Lower leg skin (tissue), 4 donors: ENCODE measurements at regions of chr22 and their contacts with region 1.

Region 1: DNA sequence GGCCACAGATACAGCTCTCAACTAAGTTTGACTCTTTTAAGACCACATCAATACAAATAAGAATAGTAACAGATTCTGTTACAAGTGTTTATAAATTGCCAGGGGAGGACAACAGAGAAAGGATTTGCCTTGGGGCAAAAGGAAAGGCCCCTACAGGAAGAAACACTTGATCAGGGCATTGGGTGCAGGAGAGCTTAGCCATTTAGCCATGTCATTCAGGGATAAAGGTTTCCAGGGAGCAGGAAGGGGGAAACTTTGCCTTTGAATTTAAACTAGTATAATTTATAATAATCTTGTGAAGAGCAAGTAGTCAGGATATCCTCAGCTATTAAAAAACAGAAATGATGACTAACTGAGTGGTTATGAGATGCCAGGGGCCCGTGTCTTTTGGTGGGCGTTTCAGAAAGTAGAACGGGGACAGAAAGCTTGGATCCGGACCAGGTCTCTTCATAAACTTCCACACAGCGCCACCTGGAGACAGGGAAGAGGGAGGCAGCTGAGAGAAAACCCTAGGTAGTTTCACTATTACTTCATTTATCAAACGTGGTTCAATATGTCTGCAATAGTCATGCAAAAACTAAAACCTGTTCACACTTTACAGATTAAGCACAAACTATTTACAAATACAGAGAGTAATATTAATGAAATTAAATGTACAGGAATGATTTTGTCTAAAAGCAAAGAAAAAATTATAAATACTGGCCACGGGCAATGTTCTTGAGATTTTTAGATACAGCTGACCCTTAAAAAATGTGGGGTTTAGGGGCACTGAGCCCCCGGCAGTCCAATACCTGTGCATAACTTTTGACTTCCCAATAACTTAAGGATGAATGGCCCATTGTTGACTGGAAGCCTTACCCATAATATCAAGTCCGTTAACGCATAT is 11.0 kb upstream of the SLC5A4 start:
- DNase-seq: peak; percentile 67 to 92
- H3K4me3 ChIP-seq: no peak overlapping the region
- CTCF ChIP-seq: no peak
- POLR2A ChIP-seq: no peak

Region 2: DNA sequence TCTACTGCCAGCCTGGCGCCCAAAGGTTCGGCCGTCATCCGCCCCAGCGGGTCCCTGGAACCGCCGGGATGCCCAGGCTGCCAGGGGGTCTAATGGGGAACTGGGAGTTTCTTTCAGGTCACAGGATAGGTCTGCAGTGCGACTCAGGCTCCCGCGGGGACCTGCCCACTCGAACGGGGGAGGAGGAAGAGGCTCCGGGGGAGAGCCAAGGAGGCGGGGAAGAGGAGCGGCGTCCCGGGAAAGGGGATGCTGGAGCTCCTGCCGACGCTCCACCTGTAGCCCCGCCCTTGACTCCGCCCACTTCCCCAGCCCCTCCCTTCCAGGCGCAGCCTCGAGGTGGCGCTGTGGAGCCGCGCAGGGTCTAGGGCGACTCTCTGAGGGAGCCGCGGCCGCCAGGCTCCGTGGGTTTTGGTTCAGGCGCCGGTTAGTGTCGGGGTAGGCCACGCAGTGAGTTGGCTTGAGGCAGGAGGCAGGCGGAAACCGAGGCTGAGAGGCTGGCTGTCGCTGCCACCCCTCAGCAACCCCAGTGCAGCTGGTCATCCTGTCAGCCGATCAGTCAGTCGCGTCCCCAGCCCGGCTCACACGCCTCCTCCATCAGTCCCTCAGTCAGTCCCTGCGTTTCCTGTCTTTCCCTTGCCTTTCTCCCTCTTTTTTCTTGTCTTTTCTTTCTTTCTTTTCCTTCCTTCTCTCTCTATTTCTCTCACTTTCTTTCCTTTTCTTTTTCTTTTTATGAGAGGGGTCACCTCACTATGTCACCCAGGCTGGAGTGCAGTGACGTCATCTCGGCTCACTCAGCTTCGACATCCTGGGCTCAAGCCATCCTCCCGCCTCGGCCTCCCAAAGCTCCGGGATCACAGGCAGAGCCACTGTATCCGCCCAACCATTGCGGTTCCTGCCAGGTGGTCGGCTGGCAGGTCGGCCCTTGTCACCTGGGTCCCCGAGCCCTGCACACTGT is 295.4 kb before region 1 on chr22:
- intact Hi-C with region 1: loop called (anchors 10 kb)
- DNase-seq: peak; percentile 74 to 97
- H3K4me3 ChIP-seq: no peak overlapping the region
- CTCF ChIP-seq: peak in 1 of 3 donors; percentile 6
- POLR2A ChIP-seq: no peak

Region 3: GRCh38 chr22:32823024-32823730 is 557.1 kb after region 1 on chr22:
- intact Hi-C with region 1: no loop called
- DNase-seq: no peak
- H3K4me3 ChIP-seq: no peak overlapping the region
- CTCF ChIP-seq: no peak
- POLR2A ChIP-seq: no peak